ENCODE measurements at regions of chr6 and their contacts with region 1.

Region 1: GRCh38 chr6:33317669-33318425 is at the start of gene ZBTB22:
- DNase-seq: peak; percentile 97 to 100 (median 99)
- H3K4me3 ChIP-seq: peak within 1 kb of the TSS; percentile 49
- H3K27ac ChIP-seq: peak within 1 kb of the TSS; percentile 81 to 83
- H3K4me1 ChIP-seq: peaks cover 14% of the 10 kb centered on the region
- H3K27me3 ChIP-seq: no peaks in the 10 kb centered on the region
- CTCF ChIP-seq: no peak
- EP300 ChIP-seq: no peak
- POLR2A ChIP-seq: no peak
- total RNA-seq, gene ZBTB22: 17.9 to 38.0 (median 26.1) TPM

Region 2: DNA sequence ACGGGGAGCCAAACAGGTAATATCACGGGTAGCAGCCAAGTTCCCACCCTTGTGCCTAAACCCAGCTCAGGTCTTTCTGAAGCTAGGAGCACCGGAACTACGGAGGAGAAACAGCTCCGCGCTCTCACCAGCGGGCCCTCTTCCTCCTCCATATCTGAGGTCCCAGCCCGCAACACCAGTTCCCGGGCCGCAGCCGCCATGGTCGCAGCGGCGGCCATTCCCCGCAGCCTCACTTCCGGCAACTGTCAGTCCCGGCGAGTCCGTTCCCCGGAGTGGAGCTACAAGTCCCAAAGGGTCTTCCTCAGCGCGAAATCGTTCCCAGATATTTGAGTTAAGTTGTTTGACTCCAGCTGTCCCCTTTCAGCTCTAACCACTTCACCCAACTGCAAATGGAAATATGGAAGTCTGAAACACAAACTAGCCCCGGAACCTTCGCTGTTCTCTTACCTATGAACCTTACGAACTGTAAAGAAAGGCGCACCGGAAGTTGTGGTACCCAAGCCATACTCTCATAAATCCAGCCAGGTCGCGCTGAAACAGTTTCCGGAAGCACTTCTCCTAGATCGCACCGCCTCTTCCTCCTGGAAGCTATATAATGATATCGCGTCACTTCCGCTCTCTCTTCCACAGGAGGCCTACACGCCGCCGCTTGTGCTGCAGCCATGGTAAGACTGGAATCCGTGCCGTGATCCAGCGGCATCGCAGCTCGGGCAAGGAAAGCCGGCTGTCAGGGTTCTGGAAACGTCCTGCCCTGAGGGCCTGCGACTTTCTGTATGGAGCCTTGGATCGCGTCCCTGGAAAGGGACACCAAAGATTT is 46.2 kb before region 1 on chr6 and contains the starts of genes RPS18 and VPS52:
- intact Hi-C with region 1: loop called in 1 of 4 experiments (anchors 5 kb)
- DNase-seq: peak; percentile 91 to 95 (median 93)
- H3K4me3 ChIP-seq: peak within 1 kb of the TSS; percentile 55
- H3K27ac ChIP-seq: peak within 1 kb of the TSS; percentile 59 to 89
- H3K4me1 ChIP-seq: peaks cover 5% of the 10 kb centered on the region
- H3K27me3 ChIP-seq: no peaks in the 10 kb centered on the region
- CTCF ChIP-seq: peak in 2 of 3 donors; percentile 10 to 17
- EP300 ChIP-seq: peak; percentile 38
- POLR2A ChIP-seq: peak; percentile 96
- total RNA-seq, gene RPS18: 4,177 to 8,845 (median 4,854) TPM
- total RNA-seq, gene VPS52: 24.0 to 55.6 (median 45.2) TPM

Region 3: DNA sequence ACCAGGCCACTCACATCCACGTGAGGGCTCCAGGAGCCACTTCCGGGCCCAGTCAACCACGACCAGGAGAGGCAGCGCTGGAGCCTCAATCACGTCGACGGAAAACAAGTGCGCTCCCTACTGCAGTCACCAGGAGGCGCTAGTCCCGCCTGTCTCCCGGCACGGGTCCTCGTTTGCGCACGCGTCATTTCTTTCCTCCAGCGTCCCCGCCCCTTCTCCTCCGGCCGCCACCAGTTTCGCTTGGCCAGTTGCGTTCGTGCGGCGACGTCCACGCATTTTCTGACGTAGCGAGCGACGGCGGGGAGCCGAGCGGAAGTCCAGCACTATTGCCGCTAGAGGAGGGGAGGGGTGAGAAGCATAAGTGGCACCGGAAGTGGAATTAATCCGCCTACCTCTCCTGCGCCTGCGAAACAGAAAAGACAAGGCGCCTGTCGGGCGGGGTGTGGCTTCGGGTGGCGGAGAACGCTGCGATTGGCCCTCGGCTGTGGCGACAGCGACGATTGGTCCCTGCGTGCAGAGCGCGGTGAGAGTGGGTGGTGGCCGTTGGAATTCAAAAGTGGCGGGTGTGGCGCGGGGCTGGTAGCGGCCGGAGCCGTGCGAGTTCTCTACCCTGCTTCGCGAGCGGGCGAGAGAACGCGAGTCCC is 73.6 kb after region 1 on chr6 and contains the start of gene KIFC1:
- intact Hi-C with region 1: no loop called
- DNase-seq: peak; percentile 99 to 100 (median 99)
- H3K4me3 ChIP-seq: peak within 1 kb of the TSS; percentile 67
- H3K27ac ChIP-seq: peak within 1 kb of the TSS; percentile 84 to 90
- H3K4me1 ChIP-seq: peaks cover 6% of the 10 kb centered on the region
- H3K27me3 ChIP-seq: no peaks in the 10 kb centered on the region
- CTCF ChIP-seq: peak; percentile 98 to 99 (median 99)
- EP300 ChIP-seq: peak; percentile 87
- POLR2A ChIP-seq: no peak
- total RNA-seq, gene KIFC1: 0.60 to 3.9 (median 2.2) TPM

Region 4: DNA sequence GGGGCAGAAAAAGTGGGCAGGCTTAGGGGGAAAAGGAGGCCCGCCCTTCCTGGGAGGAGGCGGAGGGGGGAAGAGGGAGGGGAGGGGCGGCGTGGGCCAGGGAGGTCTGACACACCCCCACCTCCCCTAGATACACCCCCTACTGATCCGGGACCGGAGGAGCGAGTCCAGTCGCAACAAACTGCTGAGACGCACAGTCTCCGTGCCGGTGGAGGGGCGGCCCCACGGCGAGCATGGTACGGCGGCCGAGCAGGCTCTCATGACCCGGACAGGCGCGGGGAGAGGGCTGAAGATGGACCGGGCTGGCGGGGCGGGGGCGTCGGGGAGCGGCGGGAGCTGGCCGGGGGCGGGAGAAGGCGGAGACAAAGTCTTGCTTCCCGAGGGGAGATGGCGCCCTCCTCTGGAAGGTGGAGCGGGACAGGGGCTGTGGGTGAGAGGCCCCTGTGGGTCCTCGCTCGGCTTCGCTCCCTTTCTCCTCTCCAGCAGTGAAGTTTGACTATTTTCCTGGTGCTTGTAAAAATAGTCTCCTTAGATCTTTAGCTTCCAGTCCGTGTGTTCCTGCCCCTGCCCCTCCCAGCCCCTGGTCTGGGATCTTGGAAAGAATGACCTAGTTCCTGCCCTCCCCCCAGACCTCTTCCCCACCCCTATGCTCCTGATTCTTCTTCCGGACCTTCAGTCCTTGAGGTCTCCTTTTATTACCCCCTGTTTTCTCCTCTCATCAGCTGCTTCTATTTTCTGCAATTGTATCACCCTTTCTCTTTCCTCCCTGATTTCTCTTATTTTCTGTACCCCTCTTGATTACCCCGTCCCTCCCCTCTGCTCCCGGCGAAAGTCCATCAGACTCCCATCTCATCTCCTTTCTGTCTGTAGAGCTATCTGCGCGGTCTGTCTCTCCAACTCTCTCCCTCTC is 108.1 kb after region 1 on chr6:
- intact Hi-C with region 1: loop called in 1 of 4 experiments (anchors 10 kb)
- DNase-seq: peak; percentile 93 to 94 (median 94)
- H3K4me3 ChIP-seq: peak overlapping the region; percentile 59
- H3K27ac ChIP-seq: peak overlapping the region; percentile 80 to 96
- H3K4me1 ChIP-seq: peaks cover 29% of the 10 kb centered on the region
- H3K27me3 ChIP-seq: no peaks in the 10 kb centered on the region
- CTCF ChIP-seq: peak; percentile 44 to 58 (median 49)
- EP300 ChIP-seq: no peak
- POLR2A ChIP-seq: peak; percentile 26